ENCODE measurements at regions of chr6 and their contacts with region 1.

Region 1: GRCh38 chr6:149925974-149926777 is 3.3 kb upstream of the RAET1G start:
- DNase-seq: peak; percentile 93
- ATAC-seq: peak; percentile 83
- H3K4me3 Mint-ChIP-seq: peak overlapping the region; percentile 47
- H3K27ac Mint-ChIP-seq: no peak overlapping the region
- H3K4me1 Mint-ChIP-seq: peaks cover 21% of the 10 kb centered on the region
- H3K27me3 Mint-ChIP-seq: peaks cover 80% of the 10 kb centered on the region

Region 2: GRCh38 chr6:149545754-149546528 is 380.2 kb before region 1 on chr6 and contains the start of gene PPIL4:
- CTCF ChIA-PET with region 1: no interaction called
- POLR2A ChIA-PET with region 1: no interaction called
- intact Hi-C with region 1: loop called in 1 of 2 experiments (anchors 5 kb)
- DNase-seq: peak; percentile 98
- ATAC-seq: peak; percentile 85
- H3K4me3 Mint-ChIP-seq: peak within 1 kb of the TSS; percentile 97
- H3K27ac Mint-ChIP-seq: peak within 1 kb of the TSS; percentile 98
- H3K4me1 Mint-ChIP-seq: peaks cover 42% of the 10 kb centered on the region
- H3K27me3 Mint-ChIP-seq: no peaks in the 10 kb centered on the region
- total RNA-seq, gene PPIL4: 22.6 to 26.8 TPM

Region 3: DNA sequence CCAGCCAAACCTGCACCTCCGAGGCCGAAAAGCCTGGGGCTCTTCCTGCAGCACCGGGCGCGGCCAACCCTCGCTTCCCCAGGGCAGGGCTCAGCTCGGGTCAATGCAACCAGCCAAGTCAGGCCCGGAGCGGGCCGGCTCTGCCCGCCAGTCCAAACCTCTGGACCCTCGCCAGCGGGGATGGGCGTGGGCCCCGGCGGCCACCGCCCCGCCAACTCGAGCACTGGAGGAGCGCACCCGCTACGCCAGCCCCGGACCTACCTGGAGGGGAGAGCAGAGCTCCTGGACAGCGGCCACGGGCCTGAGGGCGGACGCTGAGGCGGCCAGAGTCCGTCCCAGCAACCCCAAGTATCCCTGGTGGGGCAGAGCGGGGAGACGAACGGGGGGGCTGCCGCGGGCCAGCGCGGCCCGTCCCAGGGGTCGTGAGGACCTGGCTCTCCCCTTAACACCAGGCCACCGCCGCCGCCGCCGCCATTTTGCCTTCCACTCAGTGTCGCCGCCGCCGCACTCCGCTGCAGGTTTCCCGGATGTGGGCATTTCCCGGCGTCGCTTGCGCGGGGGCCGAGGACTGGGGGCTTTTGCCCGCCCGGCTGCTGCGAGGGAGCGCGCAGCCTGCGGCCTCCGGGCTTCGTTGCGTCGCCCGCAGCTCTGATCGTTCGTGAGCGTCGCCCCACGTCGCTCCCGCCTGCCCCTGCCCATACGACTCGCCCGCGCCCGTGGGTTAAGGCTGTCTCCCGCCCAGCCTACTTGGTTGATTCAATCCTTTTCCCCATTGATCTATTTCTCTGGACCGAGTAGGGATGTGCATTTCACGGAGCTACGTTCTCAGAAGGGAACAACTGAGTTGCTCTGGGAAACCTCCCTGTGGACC is 208.4 kb before region 1 on chr6 and contains the start of gene LATS1:
- CTCF ChIA-PET with region 1: no interaction called
- POLR2A ChIA-PET with region 1: no interaction called
- intact Hi-C with region 1: loop called in 1 of 2 experiments (anchors 5 kb)
- DNase-seq: peak; percentile 97
- ATAC-seq: peak; percentile 93
- H3K4me3 Mint-ChIP-seq: peak within 1 kb of the TSS; percentile 88
- H3K27ac Mint-ChIP-seq: peak within 1 kb of the TSS; percentile 98
- H3K4me1 Mint-ChIP-seq: peaks cover 25% of the 10 kb centered on the region
- H3K27me3 Mint-ChIP-seq: no peaks in the 10 kb centered on the region
- total RNA-seq, gene LATS1: 21.2 to 23.5 TPM

Region 4: DNA sequence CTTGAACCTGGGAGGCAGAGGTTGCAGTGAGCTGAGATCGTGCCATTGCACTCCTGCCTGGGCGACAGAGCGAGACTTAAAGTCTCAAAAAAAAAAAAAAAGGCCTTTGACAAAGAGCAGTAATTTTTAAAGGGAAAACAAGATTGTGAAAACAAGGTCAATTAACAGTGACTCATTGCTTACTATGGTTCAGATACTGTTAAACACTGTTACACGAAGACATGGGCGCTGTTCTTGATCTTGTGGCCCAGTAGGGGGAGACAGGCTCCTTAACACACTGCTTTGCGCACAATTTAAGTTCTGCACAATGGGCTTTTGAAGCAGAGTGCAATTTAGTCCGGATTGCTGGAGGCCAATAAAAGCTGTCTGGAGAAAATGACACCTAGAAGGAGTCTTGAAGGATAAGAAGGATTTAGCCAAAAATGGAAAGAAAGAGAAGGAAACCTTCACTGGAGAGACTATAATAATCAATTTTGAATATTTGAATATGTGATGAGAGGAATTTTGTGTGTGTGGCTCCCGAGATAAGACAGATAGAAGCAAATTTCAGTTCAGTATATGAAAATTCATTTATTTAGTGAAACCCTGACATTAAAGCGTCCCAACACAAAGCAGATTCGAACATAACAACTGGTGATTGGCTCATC is 202.3 kb before region 1 on chr6:
- CTCF ChIA-PET with region 1: no interaction called
- POLR2A ChIA-PET with region 1: no interaction called
- intact Hi-C with region 1: loop called in 1 of 2 experiments (anchors 1 kb)
- DNase-seq: peak; percentile 61
- ATAC-seq: peak; percentile 99
- H3K4me3 Mint-ChIP-seq: no peak overlapping the region
- H3K27ac Mint-ChIP-seq: peak overlapping the region; percentile 22
- H3K4me1 Mint-ChIP-seq: peaks cover 16% of the 10 kb centered on the region
- H3K27me3 Mint-ChIP-seq: no peaks in the 10 kb centered on the region

Region 5: DNA sequence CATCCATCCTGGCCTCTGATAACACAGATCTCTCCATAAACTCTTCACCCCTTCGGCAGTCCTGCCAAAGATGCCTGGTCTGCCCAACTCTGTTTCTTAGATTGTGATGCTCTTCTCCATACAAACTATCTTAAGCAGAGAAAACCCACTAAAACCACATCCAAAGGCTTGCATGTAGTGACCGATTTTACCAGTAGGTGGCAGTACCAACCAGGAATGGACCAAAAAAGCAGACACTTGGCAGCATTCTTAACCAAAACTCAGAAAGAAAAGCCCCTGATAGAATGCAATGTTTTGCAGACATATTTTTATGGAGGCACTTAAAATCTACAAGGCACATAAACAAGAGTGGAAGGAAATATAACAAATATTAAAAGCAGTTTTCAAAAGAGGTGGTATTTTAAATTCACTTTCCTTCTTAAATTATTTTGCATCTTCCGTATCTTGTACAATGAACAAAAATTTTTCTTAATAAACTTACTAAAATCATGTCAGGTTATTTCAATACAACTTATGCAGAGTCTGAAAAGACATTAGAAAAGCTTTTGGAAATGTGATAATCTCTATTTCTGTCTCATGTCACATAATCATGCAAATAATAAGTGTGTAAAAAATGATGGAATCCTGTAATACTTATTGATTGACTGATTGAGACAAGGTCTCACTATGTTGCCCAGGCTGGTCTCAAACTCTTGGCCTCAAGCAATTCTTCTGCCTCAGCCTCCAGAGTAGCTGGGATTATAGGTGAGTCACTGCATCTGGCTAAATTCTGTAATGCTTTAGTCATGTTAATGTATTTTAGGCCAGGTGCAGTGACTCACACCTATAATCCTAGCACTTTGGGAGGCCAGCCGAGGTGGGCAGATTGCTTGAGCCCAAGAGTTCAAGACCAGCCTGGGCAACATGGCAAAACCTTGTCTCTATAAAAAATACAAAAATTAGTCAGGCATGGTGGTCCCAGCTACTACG is 91.4 kb before region 1 on chr6:
- CTCF ChIA-PET with region 1: interaction called, 12 read pairs
- POLR2A ChIA-PET with region 1: no interaction called
- intact Hi-C with region 1: loop called (anchors 1 kb)
- DNase-seq: peak; percentile 78
- ATAC-seq: peak; percentile 66
- H3K4me3 Mint-ChIP-seq: no peak overlapping the region
- H3K27ac Mint-ChIP-seq: no peak overlapping the region
- H3K4me1 Mint-ChIP-seq: no peaks in the 10 kb centered on the region
- H3K27me3 Mint-ChIP-seq: no peaks in the 10 kb centered on the region

Region 6: GRCh38 chr6:149840345-149841075 is 85.7 kb before region 1 on chr6:
- CTCF ChIA-PET with region 1: interaction called, 12 read pairs
- POLR2A ChIA-PET with region 1: no interaction called
- intact Hi-C with region 1: loop called in 1 of 2 experiments (anchors 1 kb)
- DNase-seq: peak; percentile 79
- ATAC-seq: peak; percentile 73
- H3K4me3 Mint-ChIP-seq: no peak overlapping the region
- H3K27ac Mint-ChIP-seq: no peak overlapping the region
- H3K4me1 Mint-ChIP-seq: no peaks in the 10 kb centered on the region
- H3K27me3 Mint-ChIP-seq: peaks cover 1% of the 10 kb centered on the region

Region 7: GRCh38 chr6:150334790-150335783 is 408.9 kb after region 1 on chr6:
- CTCF ChIA-PET with region 1: no interaction called
- POLR2A ChIA-PET with region 1: no interaction called
- intact Hi-C with region 1: loop called in 1 of 2 experiments (anchors 10 kb)
- DNase-seq: peak; percentile 61
- ATAC-seq: no peak
- H3K4me3 Mint-ChIP-seq: no peak overlapping the region
- H3K27ac Mint-ChIP-seq: no peak overlapping the region
- H3K4me1 Mint-ChIP-seq: no peaks in the 10 kb centered on the region
- H3K27me3 Mint-ChIP-seq: peaks cover 11% of the 10 kb centered on the region